Thyroid gland (tissue), 4 donors: ENCODE measurements at regions of chr1 and their contacts with region 1.

Region 1: DNA sequence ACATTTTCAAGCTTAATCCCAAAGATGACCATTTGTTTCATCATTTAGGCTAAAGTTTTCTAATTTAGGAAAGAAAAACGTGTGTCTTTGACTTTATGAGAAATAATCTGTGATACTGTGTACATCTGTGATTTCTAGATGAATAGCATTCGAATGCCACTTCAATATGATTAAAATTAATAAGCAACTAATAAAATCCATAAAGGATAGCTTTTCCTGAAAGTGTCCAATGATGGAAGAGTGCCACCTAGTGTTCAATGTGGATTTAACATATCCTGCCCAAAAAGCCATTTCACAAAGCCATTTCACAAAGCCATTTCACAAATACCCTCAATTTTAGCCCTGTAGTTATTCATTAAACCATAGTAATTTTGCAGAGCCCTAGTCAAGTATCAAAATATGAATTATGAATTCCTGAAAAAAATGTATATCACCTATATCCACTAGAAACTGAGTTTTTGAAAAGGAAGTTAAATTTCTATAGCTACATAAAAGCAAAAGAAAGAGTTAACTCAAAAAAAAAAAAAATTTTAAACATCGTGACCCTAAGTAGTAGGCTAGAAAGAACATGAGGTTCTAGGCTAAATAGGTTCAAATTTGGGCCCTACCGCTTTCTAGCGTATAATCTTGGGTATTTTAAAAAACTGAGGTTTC is 19.1 kb downstream of the NME7 start:
- DNase-seq: no peak
- H3K4me3 ChIP-seq: no peak overlapping the region
- H3K27ac ChIP-seq: no peak overlapping the region
- H3K4me1 ChIP-seq: peaks cover 0 to 5% of the 10 kb centered on the region in 2 donors
- H3K27me3 ChIP-seq: no peaks in the 10 kb centered on the region
- CTCF ChIP-seq: peak in 5 of 6 experiments; percentile 25 to 92 (median 69)
- POLR2A ChIP-seq: no peak

Region 2: GRCh38 chr1:168342572-168343280 is 1005.8 kb before region 1 on chr1:
- intact Hi-C with region 1: loop called (anchors 10 kb)
- DNase-seq: peak; percentile 81 to 87
- H3K4me3 ChIP-seq: no peak overlapping the region
- H3K27ac ChIP-seq: no peak overlapping the region
- H3K4me1 ChIP-seq: no peaks in the 10 kb centered on the region
- H3K27me3 ChIP-seq: no peaks in the 10 kb centered on the region
- CTCF ChIP-seq: peak; percentile 53 to 82 (median 70)
- POLR2A ChIP-seq: no peak

Region 3: DNA sequence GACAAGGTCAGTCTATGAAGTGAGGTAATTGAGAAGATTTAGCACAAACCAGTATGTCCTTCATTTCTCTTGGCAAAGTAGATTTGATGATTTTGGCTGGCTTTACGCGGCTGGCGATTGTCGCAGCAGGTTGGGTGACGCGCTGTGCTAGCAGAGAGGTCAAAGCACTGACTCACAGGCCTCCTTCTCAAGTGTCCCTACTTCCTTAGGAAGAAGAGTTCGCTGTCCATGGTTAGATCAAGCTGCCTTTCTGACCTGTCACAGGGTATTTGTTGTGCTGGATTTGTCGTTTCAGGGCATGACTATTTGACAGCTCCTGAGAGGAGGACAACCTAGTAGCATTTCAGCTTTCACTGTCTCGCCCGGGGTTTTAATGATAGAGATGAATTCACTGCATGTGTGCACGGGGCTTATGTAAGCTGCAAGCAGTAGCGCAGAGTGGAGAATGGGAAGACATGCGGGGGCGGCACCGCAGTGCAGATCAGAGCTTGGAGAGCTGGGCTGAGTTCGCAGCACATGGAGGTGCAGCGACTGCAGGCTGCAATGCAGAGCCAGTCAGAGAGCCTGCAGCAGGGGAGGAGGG is 739.3 kb before region 1 on chr1:
- intact Hi-C with region 1: loop called (anchors 5 kb)
- DNase-seq: peak; percentile 15 to 24
- H3K4me3 ChIP-seq: no peak overlapping the region
- H3K27ac ChIP-seq: no peak overlapping the region
- H3K4me1 ChIP-seq: peaks cover 0 to 12% of the 10 kb centered on the region in 2 donors
- H3K27me3 ChIP-seq: no peaks in the 10 kb centered on the region
- CTCF ChIP-seq: no peak
- POLR2A ChIP-seq: no peak

Region 4: DNA sequence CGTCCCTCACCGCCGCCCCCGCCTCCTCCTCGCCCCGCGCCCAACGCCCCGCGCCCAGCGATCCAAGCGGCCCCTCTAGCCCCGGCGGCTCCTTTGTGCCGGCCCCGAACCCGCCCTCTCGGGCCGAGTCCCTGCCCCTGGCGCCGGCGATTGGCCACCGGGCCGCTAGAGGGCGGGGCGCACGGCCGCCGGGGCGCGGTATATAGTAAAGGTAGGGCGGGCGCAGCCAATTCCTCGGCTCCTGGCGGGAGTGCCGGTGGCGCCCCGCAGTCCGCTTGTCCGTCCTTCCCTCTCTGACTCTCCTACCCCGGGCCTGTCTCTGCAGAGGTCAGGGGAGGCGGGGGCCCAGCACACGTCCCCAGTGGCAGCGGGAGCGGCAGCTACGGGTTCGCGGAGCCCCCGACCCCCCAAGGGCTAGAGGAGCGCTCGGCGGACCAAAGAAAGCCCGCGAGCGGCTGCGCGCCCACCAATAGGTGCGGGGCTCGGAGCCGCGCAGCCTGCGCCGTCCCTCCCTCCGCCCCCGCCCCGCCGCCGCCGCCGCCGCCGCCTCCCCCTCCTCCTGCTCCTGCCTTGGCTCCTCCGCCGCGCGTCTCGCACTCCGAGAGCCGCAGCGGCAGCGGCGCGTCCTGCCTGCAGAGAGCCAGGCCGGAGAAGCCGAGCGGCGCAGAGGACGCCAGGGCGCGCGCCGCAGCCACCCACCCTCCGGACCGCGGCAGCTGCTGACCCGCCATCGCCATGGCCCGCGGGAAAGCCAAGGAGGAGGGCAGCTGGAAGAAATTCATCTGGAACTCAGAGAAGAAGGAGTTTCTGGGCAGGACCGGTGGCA is 242.2 kb before region 1 on chr1 and contains the start of gene ATP1B1:
- intact Hi-C with region 1: loop called (anchors 10 kb)
- DNase-seq: peak; percentile 92 to 94
- H3K4me3 ChIP-seq: peak within 1 kb of the TSS; percentile 51 to 92 (median 81)
- H3K27ac ChIP-seq: peak within 1 kb of the TSS; percentile 97 to 100 (median 99)
- H3K4me1 ChIP-seq: peaks cover 43 to 46% of the 10 kb centered on the region in 2 donors
- H3K27me3 ChIP-seq: no peaks in the 10 kb centered on the region
- CTCF ChIP-seq: peak in 4 of 6 experiments; percentile 38 to 49 (median 44)
- POLR2A ChIP-seq: peak; percentile 99 to 100
- total RNA-seq, gene ATP1B1: 310 to 509 (median 429) TPM

Region 5: DNA sequence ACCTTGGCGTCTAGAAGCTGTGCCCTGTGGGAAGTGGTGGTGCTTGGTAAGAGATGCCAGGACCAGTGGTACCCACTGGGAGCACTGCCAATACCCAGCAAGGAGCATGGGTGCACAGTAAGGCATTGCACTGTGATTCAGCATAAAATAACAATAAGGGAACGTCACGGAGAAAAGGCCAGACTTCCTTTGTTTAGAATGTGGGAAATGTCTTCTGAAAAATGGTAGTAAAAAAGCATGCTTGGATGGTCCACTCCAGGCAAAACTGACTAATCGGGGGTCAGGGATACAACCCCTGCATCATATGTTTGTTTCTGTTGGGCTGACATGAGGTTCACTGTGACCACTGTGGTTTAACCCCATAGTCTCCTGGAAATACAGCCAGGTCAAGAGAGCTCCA is 431.5 kb after region 1 on chr1:
- intact Hi-C with region 1: no loop called
- DNase-seq: no peak
- H3K4me3 ChIP-seq: no peak overlapping the region
- H3K27ac ChIP-seq: no peak overlapping the region
- H3K4me1 ChIP-seq: peaks cover 0 to 9% of the 10 kb centered on the region in 2 donors
- H3K27me3 ChIP-seq: no peaks in the 10 kb centered on the region
- CTCF ChIP-seq: no peak
- POLR2A ChIP-seq: no peak